ENCODE measurements at regions of chr1 and their contacts with region 1.

Region 1: DNA sequence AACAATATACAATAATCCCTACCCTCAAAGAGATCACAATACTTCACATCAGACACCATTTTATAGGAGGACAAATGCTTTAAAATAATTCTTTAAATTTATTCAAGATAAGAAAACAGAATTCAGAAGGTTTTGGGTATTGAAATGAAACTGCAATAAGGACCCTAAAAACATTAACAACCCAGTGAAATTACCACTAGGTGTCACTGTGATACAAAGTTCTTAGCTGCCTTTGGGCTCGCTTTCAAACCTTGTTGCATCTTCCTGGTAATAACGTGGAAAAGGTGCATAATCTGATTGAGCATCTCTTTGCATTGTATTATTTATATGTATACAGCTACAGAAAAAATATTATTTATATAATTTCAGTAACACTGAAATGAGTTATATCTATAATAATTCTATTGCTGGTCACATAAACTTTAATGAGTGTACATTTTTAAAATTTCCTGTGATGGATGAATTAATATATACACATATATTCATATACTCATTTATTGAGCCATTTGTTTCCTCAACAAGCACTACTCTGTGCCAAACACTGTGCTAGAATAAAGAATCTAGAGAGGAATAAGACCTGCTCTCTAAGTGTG is 185.2 kb downstream of the FAF1 start:
- DNase-seq: peak in 2 of 4 donors; percentile 24 to 59
- ATAC-seq: peak; percentile 80
- H3K4me3 ChIP-seq: no peak overlapping the region
- H3K27ac ChIP-seq: no peak overlapping the region
- H3K4me1 ChIP-seq: no peaks in the 10 kb centered on the region
- H3K27me3 ChIP-seq: no peaks in the 10 kb centered on the region
- CTCF ChIP-seq: peak; percentile 65 to 71

Region 2: GRCh38 chr1:50591598-50591997 is 183.3 kb before region 1 on chr1:
- intact Hi-C with region 1: no loop called
- DNase-seq: no peak
- ATAC-seq: no peak
- H3K4me3 ChIP-seq: no peak overlapping the region
- H3K27ac ChIP-seq: no peak overlapping the region
- H3K4me1 ChIP-seq: no peaks in the 10 kb centered on the region
- H3K27me3 ChIP-seq: no peaks in the 10 kb centered on the region
- CTCF ChIP-seq: no peak

Region 3: GRCh38 chr1:51032902-51033301 is 258.0 kb after region 1 on chr1:
- intact Hi-C with region 1: loop called in 1 of 2 experiments (anchors 10 kb)
- DNase-seq: no peak
- ATAC-seq: no peak
- H3K4me3 ChIP-seq: no peak overlapping the region
- H3K27ac ChIP-seq: no peak overlapping the region
- H3K4me1 ChIP-seq: no peaks in the 10 kb centered on the region
- H3K27me3 ChIP-seq: no peaks in the 10 kb centered on the region
- CTCF ChIP-seq: no peak

Measured in left lung (tissue), 14 donors.